ENCODE measurements at regions of chr6 and their contacts with region 1.

Region 1: GRCh38 chr6:84227434-84228197 is at the start of gene CEP162:
- DNase-seq: peak; percentile 92
- H3K4me3 Mint-ChIP-seq: peak within 1 kb of the TSS; percentile 100
- H3K27ac Mint-ChIP-seq: peak within 1 kb of the TSS; percentile 93
- H3K4me1 Mint-ChIP-seq: peaks cover 14% of the 10 kb centered on the region
- H3K27me3 Mint-ChIP-seq: peaks cover 6% of the 10 kb centered on the region
- total RNA-seq, gene CEP162: 5.4 to 6.3 TPM

Region 2: DNA sequence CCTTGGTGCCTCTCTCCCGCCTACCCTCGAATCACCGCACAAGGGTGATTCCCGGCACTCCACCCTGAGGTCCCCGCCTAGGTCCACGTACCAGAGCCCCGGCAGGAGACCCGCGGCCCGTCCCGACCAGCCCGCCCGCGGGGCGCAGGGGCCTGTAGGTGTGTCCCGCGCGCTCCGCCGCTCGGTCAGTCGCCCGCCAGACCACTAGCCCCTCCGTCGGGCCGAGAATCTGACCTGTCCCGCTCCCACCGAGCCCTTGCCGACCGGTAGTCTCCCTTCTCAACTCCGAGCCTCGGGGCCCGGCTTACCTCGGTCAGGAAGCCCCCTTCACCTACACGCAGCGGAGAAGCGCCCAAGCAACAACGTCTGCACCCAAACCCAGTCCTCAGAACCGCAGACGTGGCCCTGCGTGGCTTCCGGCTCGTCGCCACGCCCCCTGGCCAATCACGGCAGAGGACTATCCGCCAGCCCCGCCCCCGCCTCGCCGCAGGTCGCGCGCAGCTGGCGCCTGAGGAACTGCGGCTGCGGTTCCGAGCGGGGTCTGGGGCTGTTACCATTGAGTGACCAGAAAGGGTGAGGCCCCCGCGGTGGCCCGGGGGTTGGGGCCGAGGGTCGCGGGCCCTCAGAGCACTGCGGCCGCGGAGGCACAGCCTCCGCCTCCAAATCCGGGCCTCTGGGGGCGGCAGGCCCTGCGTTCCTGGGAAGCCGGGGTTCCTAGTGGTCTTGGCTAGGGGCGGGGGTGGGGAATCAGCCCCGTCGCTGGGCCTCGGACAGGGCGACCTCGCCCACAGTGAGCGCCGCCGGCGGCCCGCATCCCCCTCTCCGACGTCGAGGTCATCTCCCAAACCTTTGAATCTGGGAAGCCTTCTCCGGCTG is 1034.5 kb before region 1 on chr6 and contains the starts of genes PGM3 and RWDD2A:
- CTCF ChIA-PET with region 1: no interaction called
- POLR2A ChIA-PET with region 1: no interaction called
- intact Hi-C with region 1: loop called (anchors 5 kb)
- DNase-seq: peak; percentile 93
- H3K4me3 Mint-ChIP-seq: peak within 1 kb of the TSS; percentile 95
- H3K27ac Mint-ChIP-seq: peak within 1 kb of the TSS; percentile 92
- H3K4me1 Mint-ChIP-seq: peaks cover 44% of the 10 kb centered on the region
- H3K27me3 Mint-ChIP-seq: no peaks in the 10 kb centered on the region
- total RNA-seq, gene PGM3: 20.7 to 24.6 TPM
- total RNA-seq, gene RWDD2A: 2.6 TPM

Region 3: DNA sequence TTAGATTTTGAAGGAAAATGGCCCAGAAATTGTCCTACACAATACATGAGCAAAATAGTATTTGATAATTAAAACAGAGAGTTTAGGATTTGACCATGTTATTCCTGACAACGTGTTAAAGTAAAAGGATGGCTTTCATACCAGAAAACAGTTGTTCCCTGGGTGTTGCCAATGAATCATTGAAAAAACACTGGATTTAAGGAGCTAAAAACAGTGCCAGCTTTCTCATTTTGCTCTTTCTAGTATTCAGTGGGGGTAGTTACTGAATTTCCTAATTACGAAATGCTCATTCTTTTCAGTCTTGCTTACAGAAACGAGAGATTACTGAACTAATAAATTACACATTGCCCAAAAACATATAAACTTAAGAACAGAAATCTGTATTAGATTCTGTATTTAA is 492.2 kb before region 1 on chr6:
- CTCF ChIA-PET with region 1: no interaction called
- POLR2A ChIA-PET with region 1: no interaction called
- intact Hi-C with region 1: no loop called
- DNase-seq: no peak
- H3K4me3 Mint-ChIP-seq: no peak overlapping the region
- H3K27ac Mint-ChIP-seq: no peak overlapping the region
- H3K4me1 Mint-ChIP-seq: no peaks in the 10 kb centered on the region
- H3K27me3 Mint-ChIP-seq: no peaks in the 10 kb centered on the region

Region 4: GRCh38 chr6:83884523-83884922 is 343.1 kb before region 1 on chr6:
- CTCF ChIA-PET with region 1: interaction called, 12 read pairs
- POLR2A ChIA-PET with region 1: no interaction called
- intact Hi-C with region 1: loop called (anchors 1 kb)
- DNase-seq: no peak
- H3K4me3 Mint-ChIP-seq: no peak overlapping the region
- H3K27ac Mint-ChIP-seq: no peak overlapping the region
- H3K4me1 Mint-ChIP-seq: peaks cover 14% of the 10 kb centered on the region
- H3K27me3 Mint-ChIP-seq: no peaks in the 10 kb centered on the region

Region 5: DNA sequence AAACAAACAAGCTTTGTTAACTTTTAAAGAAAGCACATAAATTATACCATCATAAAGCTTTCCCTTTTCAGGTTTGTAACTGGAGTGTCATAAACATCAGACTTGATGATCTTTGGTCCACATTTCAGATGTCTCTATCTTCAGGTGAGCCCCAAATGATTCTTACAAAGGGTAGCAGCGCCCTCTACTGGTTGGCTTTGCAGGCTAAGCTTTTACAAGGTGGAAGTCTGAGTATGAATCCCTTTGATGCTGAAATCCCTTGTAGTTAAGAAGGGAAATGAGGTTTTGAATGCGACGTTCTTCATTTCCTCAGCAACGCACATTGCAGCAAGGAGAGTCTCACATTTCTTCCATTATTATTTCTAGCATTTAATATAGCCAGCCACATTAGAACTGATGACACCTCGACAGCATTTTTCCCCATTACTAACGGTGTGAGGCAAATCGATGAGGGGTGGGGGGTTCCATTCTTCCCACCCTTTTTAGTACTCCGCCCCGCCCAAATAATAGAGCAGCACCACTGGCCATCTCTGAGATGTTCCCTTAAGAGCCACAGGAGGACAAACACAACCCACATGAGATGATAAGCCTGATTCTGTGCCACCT is 1095.9 kb after region 1 on chr6:
- CTCF ChIA-PET with region 1: interaction called, 5 read pairs
- POLR2A ChIA-PET with region 1: no interaction called
- intact Hi-C with region 1: loop called (anchors 10 kb)
- DNase-seq: peak; percentile 78
- H3K4me3 Mint-ChIP-seq: no peak overlapping the region
- H3K27ac Mint-ChIP-seq: no peak overlapping the region
- H3K4me1 Mint-ChIP-seq: no peaks in the 10 kb centered on the region
- H3K27me3 Mint-ChIP-seq: peaks cover 1% of the 10 kb centered on the region

Region 6: GRCh38 chr6:85678602-85679444 is 1451.2 kb after region 1 on chr6:
- CTCF ChIA-PET with region 1: no interaction called
- POLR2A ChIA-PET with region 1: no interaction called
- intact Hi-C with region 1: loop called (anchors 2 kb)
- DNase-seq: peak; percentile 98
- H3K4me3 Mint-ChIP-seq: peak overlapping the region; percentile 95
- H3K27ac Mint-ChIP-seq: peak overlapping the region; percentile 90
- H3K4me1 Mint-ChIP-seq: peaks cover 34% of the 10 kb centered on the region
- H3K27me3 Mint-ChIP-seq: no peaks in the 10 kb centered on the region

Measured in activated CD4-positive, alpha-beta memory T cell treated with anti-CD3 and anti-CD28 coated beads for 36 hours (primary cell).